HAP-1 (cell line): ENCODE measurements at regions of chr17 and their contacts with region 1.

Region 1: DNA sequence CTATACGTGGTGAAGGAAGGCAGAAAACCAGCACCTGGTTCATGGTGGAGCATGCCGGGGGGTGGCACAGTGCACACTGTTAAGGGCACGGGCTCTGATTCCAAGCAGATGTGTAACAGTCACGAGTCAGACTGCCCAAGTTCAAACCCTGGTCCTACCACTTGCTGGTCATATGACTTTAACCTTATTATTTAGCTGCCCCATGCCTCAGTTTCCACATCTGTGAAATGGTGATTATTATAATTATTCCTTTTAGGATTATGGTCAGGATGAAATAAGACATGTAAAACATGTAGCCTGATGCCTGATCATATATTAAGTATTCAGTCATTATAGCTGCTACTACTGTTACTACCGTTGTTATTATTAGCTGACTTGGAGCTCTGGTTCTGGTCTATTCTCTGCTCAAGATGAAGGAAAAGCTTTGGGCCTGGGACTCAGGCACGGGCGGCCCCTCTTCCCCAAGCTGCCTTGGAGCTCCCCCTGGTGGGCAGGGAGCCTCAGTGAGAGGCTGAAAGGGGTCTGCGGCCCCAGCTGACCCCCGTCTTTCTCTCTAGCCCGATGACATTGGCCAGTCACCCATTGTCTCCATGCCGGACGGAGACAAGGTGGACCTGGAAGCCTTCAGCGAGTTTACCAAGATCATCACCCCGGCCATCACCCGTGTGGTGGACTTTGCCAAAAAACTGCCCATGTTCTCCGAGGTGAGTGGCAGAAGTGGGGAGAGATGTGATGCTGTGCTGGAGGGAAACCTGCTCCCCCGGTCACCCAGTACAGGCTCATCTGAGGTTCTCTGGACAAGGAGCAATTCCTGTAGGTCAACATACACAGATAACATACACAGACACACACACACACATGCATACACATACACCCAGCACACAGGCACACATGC is 14.0 kb downstream of the NR1D1 start:
- DNase-seq: peak; percentile 32 to 80
- H3K4me3 ChIP-seq: no peak overlapping the region
- H3K4me1 ChIP-seq: no peaks in the 10 kb centered on the region
- H3K27me3 ChIP-seq: no peaks in the 10 kb centered on the region

Region 2: DNA sequence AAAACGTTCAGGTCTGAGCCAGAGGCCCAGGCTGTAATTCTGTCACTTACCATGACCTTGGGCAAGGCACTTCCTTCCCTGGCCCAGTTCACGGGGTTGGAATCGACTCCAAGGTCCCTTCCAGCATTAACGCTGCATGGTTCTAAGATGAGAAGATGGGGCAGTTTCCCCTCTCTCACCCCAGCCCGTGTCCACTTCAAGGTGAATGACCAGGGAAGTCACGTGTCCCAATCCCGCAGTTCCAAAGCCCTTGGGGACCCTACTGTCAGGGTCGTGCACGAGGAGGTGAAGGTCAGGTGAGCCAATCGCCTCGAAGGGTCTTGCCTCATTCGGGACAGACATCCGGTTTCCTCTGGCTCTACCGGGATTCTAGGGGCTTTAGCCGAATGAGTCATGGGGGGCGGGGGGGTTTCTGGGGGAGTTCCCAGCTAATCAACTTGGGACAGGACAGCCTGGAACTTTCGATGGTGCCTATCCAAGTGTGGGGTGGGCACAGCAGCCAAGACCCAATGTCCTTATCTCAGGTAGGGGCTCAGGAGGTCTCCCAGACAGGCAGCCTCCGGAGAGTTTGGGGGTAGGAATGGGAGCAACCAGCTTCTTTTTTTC is 71.9 kb before region 1 on chr17:
- in situ Hi-C with region 1: loop called (anchors 5 kb)
- DNase-seq: no peak
- H3K4me3 ChIP-seq: no peak overlapping the region
- H3K4me1 ChIP-seq: 0 out of 2 replicates have a peak, but pooled peaks cover 5% of the 10 kb centered on the region
- H3K27me3 ChIP-seq: no peaks in the 10 kb centered on the region

Region 3: DNA sequence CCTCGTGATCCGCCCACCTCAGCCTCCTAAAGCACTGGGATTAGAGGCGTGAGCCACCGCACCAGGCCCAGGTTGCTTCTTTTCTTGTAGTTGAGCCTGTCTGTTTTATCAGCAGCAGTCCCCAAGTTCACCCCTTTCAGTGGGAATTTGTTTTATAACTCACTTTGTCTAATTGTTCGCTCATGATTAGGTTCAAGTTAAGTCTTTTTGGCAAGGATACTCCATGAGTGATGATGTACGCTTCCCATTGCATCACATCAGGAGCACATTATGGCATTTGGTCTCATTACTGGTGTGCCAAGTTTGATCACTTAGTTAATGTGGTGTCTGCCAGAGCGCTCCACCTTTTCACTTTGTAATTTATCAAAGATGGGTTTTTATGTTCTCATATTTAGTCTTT is 292.6 kb after region 1 on chr17:
- in situ Hi-C with region 1: no loop called
- DNase-seq: no peak
- H3K4me3 ChIP-seq: no peak overlapping the region
- H3K4me1 ChIP-seq: no peaks in the 10 kb centered on the region
- H3K27me3 ChIP-seq: no peaks in the 10 kb centered on the region